ENCODE measurements at regions of chrX and their contacts with region 1.

Region 1: DNA sequence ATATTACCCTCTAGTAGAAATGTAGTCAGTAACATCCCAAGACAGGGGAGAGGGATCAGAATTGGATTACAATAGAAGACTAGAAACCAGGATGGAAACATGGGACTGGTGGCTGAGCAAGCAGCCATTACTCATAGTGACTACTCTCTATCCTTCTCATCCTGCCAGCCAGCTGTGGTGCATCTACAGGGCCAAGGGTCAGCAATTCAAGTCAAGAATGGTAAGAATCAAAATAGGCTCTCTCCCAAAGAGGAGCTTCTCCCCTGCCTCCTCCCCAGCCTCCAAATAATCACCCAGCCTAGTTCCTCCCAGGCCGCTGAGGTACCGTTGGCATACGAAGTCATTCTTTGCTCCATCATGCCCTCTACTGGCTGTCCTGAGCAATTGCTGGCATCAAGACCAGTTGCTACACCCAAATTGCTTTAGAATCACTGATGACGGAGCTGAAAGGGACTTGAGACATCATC is 19.4 kb downstream of the AWAT2 start:
- DNase-seq: no peak
- H3K4me3 ChIP-seq: no peak overlapping the region
- H3K27ac ChIP-seq: no peak overlapping the region
- H3K27me3 ChIP-seq: no peaks in the 10 kb centered on the region
- CTCF ChIP-seq: peak; percentile 67

Region 2: GRCh38 chrX:69222103-69223090 is 807.9 kb before region 1 on chrX:
- CTCF ChIA-PET with region 1: no interaction called
- POLR2A ChIA-PET with region 1: no interaction called
- DNase-seq: peak; percentile 15
- H3K4me3 ChIP-seq: no peak overlapping the region
- H3K27ac ChIP-seq: no peak overlapping the region
- H3K27me3 ChIP-seq: no peaks in the 10 kb centered on the region
- CTCF ChIP-seq: peak; percentile 80

Region 3: DNA sequence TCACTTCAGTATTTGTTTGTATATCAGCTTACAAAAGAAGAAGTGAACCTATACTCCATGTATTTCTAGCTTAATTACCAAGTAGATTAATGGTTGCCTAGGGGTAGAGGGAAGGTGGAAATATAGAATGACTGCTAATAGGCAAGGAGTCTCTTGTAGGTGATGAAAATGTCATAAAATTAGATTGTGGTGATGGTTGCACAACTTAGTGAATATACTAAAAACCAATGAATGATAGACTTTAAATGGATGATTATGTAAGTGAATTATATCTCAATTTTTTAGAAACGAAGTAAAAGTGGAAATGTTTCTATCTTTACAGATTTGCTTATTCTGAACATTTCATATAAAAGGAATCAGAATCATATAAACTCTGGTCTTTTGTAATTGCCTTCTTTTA is 146.1 kb before region 1 on chrX:
- CTCF ChIA-PET with region 1: no interaction called
- POLR2A ChIA-PET with region 1: no interaction called
- DNase-seq: no peak
- H3K4me3 ChIP-seq: no peak overlapping the region
- H3K27ac ChIP-seq: no peak overlapping the region
- H3K27me3 ChIP-seq: no peaks in the 10 kb centered on the region
- CTCF ChIP-seq: no peak

Region 4: DNA sequence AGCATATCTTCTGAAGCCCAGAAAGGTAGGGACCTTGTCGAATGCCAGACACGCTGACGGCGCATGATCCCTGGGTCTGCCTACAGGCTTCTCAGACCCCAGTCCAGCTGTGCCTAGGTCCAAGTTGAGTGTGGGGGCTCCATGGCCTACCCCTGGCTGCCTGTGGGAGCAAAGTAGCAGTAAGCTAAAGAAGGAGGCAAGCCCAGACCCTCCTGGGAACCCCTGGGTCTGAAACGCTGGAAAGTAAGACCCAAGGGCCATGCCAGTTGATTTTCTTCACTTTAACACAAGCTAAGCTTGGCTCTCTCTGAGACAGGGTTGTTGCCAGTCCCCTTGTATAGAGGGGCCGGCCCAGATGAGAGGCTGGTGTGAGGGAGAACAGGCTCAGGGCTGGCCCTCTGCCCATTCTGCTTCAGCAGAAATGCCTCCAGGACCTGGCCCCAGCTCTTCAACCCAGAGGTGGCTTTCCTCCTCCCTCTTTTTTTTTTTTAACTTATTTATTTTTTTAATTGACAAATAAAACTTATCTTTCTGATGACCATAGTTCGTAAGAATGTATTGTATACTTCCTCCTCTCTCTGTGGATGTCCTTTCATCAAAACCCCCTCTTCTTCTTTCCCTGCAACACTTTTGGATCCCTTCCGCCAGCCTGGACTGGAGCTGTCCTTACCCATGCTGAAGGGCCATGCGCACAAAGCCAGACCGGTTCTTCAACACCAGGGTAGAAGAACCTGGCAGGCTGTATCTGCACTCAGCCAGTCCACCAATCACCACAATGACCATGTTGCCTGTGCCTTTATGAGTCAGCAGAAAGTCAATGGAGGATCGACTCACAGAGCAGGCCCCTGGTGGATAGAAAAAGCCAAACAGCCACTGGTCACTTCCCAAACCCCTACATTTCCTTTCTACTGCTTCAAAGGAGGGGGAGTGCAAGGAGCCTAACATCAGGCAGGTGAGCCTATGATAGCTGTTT is 12.4 kb after region 1 on chrX:
- CTCF ChIA-PET with region 1: interaction called, 30 read pairs
- POLR2A ChIA-PET with region 1: no interaction called
- DNase-seq: no peak
- H3K4me3 ChIP-seq: no peak overlapping the region
- H3K27ac ChIP-seq: no peak overlapping the region
- H3K27me3 ChIP-seq: no peaks in the 10 kb centered on the region
- CTCF ChIP-seq: no peak

Region 5: GRCh38 chrX:70087857-70088630 is 57.7 kb after region 1 on chrX:
- CTCF ChIA-PET with region 1: interaction called, 14 read pairs
- POLR2A ChIA-PET with region 1: no interaction called
- DNase-seq: no peak
- H3K4me3 ChIP-seq: no peak overlapping the region
- H3K27ac ChIP-seq: peak overlapping the region; percentile 47
- H3K27me3 ChIP-seq: no peaks in the 10 kb centered on the region
- CTCF ChIP-seq: no peak

Region 6: DNA sequence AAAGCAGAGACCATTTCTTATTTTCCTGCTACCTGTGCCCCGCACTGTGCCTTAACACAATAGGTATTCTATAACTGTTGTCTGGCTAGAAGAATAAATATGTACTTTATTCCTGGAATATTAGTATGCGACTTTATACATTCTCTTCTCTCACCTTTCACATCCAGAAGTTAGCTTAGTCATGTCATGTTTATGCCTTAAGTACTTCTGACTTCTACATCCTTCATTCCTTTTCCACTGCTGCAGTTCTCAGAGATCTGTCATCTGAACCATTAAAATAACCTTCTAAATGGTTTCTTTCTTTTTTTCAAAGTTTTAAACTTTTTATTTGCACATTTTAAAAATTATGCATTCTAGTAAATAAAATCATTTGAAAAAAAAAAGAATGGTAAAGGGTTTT is 294.0 kb after region 1 on chrX:
- CTCF ChIA-PET with region 1: no interaction called
- POLR2A ChIA-PET with region 1: no interaction called
- DNase-seq: no peak
- H3K4me3 ChIP-seq: no peak overlapping the region
- H3K27ac ChIP-seq: no peak overlapping the region
- H3K27me3 ChIP-seq: no peaks in the 10 kb centered on the region
- CTCF ChIP-seq: no peak

Measured in AG04450 (cell line).